ENCODE measurements at regions of chr6 and their contacts with region 1.

Region 1: DNA sequence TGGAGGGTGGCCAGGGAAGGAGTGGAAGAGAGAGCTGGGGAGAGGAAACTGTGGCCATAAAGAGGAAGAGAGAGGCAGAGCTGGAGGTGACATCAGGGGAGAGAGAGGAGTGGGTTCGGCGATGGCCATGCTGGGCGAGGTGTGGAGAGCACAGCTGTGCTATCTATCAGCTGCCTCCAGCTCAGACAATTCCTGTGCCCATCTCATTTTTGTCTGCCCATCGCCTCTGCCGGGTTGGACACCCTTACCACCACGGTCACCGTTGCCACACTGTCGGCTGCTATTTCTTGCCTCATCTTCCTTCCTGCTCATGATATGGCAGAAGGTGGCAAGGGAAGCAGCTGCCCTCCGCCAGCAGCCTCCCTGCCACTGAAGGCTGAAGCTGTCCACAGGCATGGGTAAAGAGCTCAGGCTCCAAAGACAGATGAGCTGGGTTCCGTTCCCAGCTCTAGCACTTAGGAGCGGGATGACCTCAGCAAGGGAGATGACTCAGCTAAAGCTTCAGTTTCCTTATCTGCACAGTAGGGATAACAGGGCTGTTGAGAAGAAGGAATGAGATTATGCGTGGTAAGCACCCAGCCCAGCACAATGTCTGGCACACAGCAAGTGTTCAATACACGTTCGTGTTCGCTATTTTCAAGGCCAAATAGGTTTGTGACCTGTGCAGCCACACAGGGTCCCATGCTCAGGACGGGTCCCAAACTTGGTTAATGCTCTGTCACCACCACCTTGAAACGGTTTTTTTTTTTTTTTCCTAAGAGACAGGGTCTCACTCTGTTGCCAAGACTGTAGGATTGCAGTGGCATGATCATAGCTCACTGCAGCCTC is 21.9 kb upstream of the TAF8 start:
- DNase-seq: no peak
- H3K4me3 ChIP-seq: no peak overlapping the region
- H3K27ac ChIP-seq: no peak overlapping the region
- H3K4me1 ChIP-seq: peaks cover 4% of the 10 kb centered on the region
- H3K27me3 ChIP-seq: no peaks in the 10 kb centered on the region
- CTCF ChIP-seq: no peak

Region 2: DNA sequence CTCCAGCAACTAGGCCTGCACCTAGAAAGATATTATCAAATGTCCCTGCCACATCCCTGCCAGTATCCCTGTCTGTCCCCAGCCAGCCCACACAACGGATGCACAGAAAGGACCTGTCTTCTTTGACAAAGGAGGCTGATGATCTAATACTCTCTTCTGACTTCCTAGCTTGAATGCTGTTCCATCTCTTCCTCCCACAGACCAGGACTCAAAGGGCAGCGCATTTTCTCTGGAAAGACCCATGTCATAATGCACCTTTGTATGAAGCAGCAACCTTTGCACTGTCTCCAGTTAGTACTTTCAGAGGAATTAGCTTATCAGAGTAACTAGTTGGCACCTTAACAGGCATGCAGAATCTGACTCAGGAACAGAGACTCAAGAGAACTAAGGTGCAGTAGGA is 31.5 kb before region 1 on chr6:
- CTCF ChIA-PET with region 1: no interaction called
- dilution Hi-C with region 1: loop called (anchors 5 kb)
- in situ Hi-C with region 1: no loop called
- intact Hi-C with region 1: no loop called
- DNase-seq: no peak
- H3K4me3 ChIP-seq: no peak overlapping the region
- H3K27ac ChIP-seq: no peak overlapping the region
- H3K4me1 ChIP-seq: no peaks in the 10 kb centered on the region
- H3K27me3 ChIP-seq: no peaks in the 10 kb centered on the region
- CTCF ChIP-seq: no peak

Measured in mammary epithelial cell (primary cell).